B cell (primary cell): ENCODE measurements at regions of chr10 and their contacts with region 1.

Region 1: GRCh38 chr10:110354322-110354766 is 49.6 kb upstream of the SMNDC1 start:
- DNase-seq: peak; percentile 86
- ATAC-seq: no peak
- H3K4me3 ChIP-seq: no peak overlapping the region
- H3K4me3 Mint-ChIP-seq: peak overlapping the region; percentile 86
- H3K27ac ChIP-seq: peak overlapping the region in 1 of 2 donors; percentile 94
- H3K27ac Mint-ChIP-seq: peak overlapping the region; percentile 94
- H3K4me1 ChIP-seq: peaks cover 52 to 56% of the 10 kb centered on the region in 2 donors
- H3K4me1 Mint-ChIP-seq: peaks cover 70% of the 10 kb centered on the region
- H3K27me3 ChIP-seq: no peaks in the 10 kb centered on the region
- H3K27me3 Mint-ChIP-seq: no peaks in the 10 kb centered on the region
- CTCF ChIP-seq: peak; percentile 84

Region 2: DNA sequence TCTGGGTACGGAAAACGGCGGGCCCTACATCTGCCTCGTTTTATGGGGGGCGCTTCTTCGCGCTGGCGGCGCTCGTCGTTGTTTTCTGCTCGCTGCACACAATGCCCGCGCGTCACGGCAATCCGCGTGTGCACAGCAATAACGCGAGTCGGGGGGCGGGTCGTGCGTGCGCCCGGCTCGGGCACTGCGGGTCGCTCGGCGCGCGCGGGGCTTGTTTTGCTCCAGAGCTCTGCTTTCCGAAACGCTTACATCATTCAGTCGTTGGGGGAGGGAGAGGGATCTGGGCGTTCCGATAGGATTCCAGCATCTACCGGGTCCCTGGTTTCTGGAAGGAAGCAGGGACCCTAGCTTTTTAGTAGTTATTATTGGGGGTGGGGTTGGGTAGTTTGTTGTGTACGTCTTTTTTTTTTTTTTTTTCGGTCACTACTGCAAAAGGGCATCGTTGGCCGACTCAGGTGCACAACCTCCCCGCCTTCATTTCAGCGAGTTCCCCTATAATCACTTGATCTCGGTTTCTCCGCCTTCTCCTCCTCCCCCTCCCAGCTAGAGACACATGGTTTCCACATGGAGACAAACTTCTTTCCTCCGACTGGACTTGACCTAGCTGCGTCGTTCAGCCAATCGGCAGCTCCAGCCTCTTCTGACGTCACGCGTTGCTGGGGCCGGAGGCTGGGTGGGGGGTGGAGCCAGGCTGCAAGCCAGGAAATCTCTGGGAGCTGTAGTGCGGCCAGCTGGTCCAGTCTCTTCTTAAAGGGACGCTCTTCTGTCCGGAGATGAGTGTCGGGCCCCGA is 143.5 kb before region 1 on chr10:
- CTCF ChIA-PET with region 1: no interaction called
- POLR2A ChIA-PET with region 1: interaction called, 4 read pairs
- intact Hi-C with region 1: loop called (anchors 5 kb)
- DNase-seq: peak; percentile 94
- ATAC-seq: peak; percentile 68
- H3K4me3 ChIP-seq: peak overlapping the region; percentile 67 to 90 (median 82)
- H3K4me3 Mint-ChIP-seq: peak overlapping the region; percentile 88
- H3K27ac ChIP-seq: peak overlapping the region; percentile 82 to 85
- H3K27ac Mint-ChIP-seq: peak overlapping the region; percentile 97
- H3K4me1 ChIP-seq: peaks cover 44 to 67% of the 10 kb centered on the region in 2 donors
- H3K4me1 Mint-ChIP-seq: peaks cover 58% of the 10 kb centered on the region
- H3K27me3 ChIP-seq: peaks cover 0 to 18% (median 7%) of the 10 kb centered on the region in 4 experiments
- H3K27me3 Mint-ChIP-seq: peaks cover 4% of the 10 kb centered on the region
- CTCF ChIP-seq: no peak

Region 3: DNA sequence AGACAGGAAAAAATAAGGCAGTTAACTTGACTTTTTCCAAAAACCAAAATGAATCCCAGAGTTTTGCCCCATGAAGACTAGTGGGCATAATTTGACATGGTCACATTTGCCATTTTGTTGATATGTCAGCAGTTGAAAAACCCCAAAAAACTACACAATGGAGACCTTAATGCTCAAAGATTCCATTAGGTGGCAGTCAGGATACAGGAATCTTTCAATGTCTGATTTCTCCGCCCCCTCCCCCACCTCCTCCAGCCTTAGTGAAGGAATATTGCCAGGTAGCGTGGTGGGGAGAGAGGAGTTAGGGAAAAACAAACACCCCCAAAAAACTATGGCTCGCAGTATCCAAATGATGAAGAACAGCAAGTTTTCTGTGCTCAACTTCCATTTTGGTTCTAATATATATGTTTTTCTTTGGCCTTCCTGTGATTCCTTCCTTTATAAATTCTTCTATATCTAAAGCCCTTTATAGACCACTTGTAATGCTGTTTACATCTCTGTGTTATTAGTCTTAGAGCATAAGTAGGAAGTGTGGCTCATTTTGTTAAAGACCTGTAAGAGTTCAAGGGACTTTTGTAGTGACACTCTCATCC is 42.9 kb before region 1 on chr10:
- CTCF ChIA-PET with region 1: interaction called, 22 read pairs
- POLR2A ChIA-PET with region 1: interaction called, 4 read pairs
- intact Hi-C with region 1: loop called (anchors 1 kb)
- DNase-seq: peak; percentile 73
- ATAC-seq: peak; percentile 78
- H3K4me3 ChIP-seq: no peak overlapping the region
- H3K4me3 Mint-ChIP-seq: no peak overlapping the region
- H3K27ac ChIP-seq: no peak overlapping the region
- H3K27ac Mint-ChIP-seq: no peak overlapping the region
- H3K4me1 ChIP-seq: peaks cover 3% of the 10 kb centered on the region in 2 donors
- H3K4me1 Mint-ChIP-seq: peaks cover 8% of the 10 kb centered on the region
- H3K27me3 ChIP-seq: no peaks in the 10 kb centered on the region
- H3K27me3 Mint-ChIP-seq: peaks cover 4% of the 10 kb centered on the region
- CTCF ChIP-seq: peak; percentile 76

Region 4: DNA sequence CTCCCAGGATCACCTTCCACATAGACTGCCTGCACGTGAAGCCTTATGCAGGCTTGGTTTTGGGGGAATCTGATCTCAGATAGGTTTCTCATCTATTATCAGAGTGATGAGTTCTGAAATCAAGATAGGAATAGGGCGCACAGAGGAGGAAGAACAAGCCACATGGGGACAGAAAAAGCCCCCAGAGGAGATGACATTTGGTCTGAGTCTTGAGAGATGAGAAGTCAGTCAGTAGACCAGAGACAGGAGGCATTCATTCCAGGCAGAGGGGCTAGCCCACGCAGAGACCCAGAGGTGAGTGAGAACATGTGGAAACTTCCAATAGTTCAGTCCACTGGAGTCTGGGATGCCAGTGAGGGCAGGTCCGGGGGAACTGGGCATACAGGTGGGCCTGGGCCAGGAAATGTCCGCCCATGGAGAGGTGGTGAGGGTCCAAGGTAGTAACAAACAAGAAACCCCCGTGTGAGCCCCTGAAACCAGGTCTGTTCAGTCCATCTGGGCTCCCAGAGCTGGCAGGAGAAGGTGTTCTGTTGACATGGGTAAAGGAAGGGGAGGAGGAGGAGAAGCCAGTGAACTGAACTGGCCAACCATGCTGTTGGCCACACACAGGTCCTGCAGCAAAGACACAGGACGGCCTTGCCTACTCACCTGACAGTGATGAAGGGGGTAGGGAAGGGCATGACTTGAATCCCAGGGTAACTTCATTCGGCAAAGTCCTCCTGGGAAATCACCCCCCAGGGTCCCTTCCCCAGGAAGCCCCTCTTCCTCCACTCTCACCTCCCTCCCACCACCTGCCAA is 19.7 kb after region 1 on chr10:
- CTCF ChIA-PET with region 1: no interaction called
- POLR2A ChIA-PET with region 1: no interaction called
- intact Hi-C with region 1: no loop called
- DNase-seq: no peak
- ATAC-seq: no peak
- H3K4me3 ChIP-seq: no peak overlapping the region
- H3K4me3 Mint-ChIP-seq: no peak overlapping the region
- H3K27ac ChIP-seq: no peak overlapping the region
- H3K27ac Mint-ChIP-seq: no peak overlapping the region
- H3K4me1 ChIP-seq: no peaks in the 10 kb centered on the region
- H3K4me1 Mint-ChIP-seq: peaks cover 3% of the 10 kb centered on the region
- H3K27me3 ChIP-seq: no peaks in the 10 kb centered on the region
- H3K27me3 Mint-ChIP-seq: peaks cover 18% of the 10 kb centered on the region
- CTCF ChIP-seq: no peak

Region 5: GRCh38 chr10:110414563-110415309 is 60.4 kb after region 1 on chr10:
- CTCF ChIA-PET with region 1: interaction called, 72 read pairs
- POLR2A ChIA-PET with region 1: interaction called, 30 read pairs
- intact Hi-C with region 1: loop called (anchors 1 kb)
- DNase-seq: peak; percentile 92
- ATAC-seq: peak; percentile 92
- H3K4me3 ChIP-seq: peak overlapping the region in 1 of 5 experiments; percentile 11
- H3K4me3 Mint-ChIP-seq: peak overlapping the region; percentile 60
- H3K27ac ChIP-seq: no peak overlapping the region
- H3K27ac Mint-ChIP-seq: peak overlapping the region; percentile 76
- H3K4me1 ChIP-seq: peaks cover 57 to 74% of the 10 kb centered on the region in 2 donors
- H3K4me1 Mint-ChIP-seq: peaks cover 69% of the 10 kb centered on the region
- H3K27me3 ChIP-seq: peaks cover 0 to 28% (median 7%) of the 10 kb centered on the region in 4 experiments
- H3K27me3 Mint-ChIP-seq: peaks cover 13% of the 10 kb centered on the region
- CTCF ChIP-seq: no peak

Region 6: DNA sequence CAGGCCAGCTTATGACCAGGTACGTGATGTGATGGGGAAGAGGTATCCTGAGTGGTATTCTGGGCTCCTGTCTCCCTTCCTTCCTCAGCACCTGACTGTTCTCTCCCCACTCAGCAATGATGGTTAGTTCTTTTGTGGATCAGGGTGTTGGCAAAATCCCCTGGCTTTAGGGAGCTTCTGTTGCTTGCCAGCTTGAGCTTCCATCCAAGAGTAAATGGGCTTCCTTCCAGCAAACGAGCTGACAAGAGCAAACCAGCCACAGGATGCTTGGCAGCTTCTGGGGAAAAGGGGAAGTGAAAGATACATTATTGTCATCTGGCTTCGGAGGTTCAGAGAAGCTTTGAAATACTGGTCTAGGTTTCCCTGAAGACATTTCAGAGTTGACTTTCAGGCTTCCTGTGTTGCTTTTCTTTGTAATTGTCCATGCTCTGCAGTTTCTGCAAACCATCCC is 148.5 kb after region 1 on chr10:
- CTCF ChIA-PET with region 1: interaction called, 87 read pairs
- POLR2A ChIA-PET with region 1: interaction called, 12 read pairs
- intact Hi-C with region 1: loop called (anchors 1 kb)
- DNase-seq: peak; percentile 87
- ATAC-seq: peak; percentile 51
- H3K4me3 ChIP-seq: peak overlapping the region in 1 of 5 experiments; percentile 45
- H3K4me3 Mint-ChIP-seq: peak overlapping the region; percentile 85
- H3K27ac ChIP-seq: peak overlapping the region; percentile 82 to 87
- H3K27ac Mint-ChIP-seq: peak overlapping the region; percentile 90
- H3K4me1 ChIP-seq: peaks cover 54 to 63% of the 10 kb centered on the region in 2 donors
- H3K4me1 Mint-ChIP-seq: peaks cover 67% of the 10 kb centered on the region
- H3K27me3 ChIP-seq: peaks cover 0 to 11% (median 2%) of the 10 kb centered on the region in 4 experiments
- H3K27me3 Mint-ChIP-seq: peaks cover 6% of the 10 kb centered on the region
- CTCF ChIP-seq: no peak

Region 7: GRCh38 chr10:110556969-110557601 is 202.7 kb after region 1 on chr10:
- CTCF ChIA-PET with region 1: interaction called, 164 read pairs
- POLR2A ChIA-PET with region 1: no interaction called
- intact Hi-C with region 1: no loop called
- DNase-seq: peak; percentile 79
- ATAC-seq: peak; percentile 83
- H3K4me3 ChIP-seq: no peak overlapping the region
- H3K4me3 Mint-ChIP-seq: no peak overlapping the region
- H3K27ac ChIP-seq: no peak overlapping the region
- H3K27ac Mint-ChIP-seq: no peak overlapping the region
- H3K4me1 ChIP-seq: peaks cover 0 to 4% of the 10 kb centered on the region in 2 donors
- H3K4me1 Mint-ChIP-seq: peaks cover 3% of the 10 kb centered on the region
- H3K27me3 ChIP-seq: peaks cover 0 to 6% (median 2%) of the 10 kb centered on the region in 4 experiments
- H3K27me3 Mint-ChIP-seq: peaks cover 15% of the 10 kb centered on the region
- CTCF ChIP-seq: peak; percentile 72

Region 8: GRCh38 chr10:110918643-110919363 is 564.5 kb after region 1 on chr10 and contains the start of gene BBIP1:
- CTCF ChIA-PET with region 1: no interaction called
- POLR2A ChIA-PET with region 1: no interaction called
- intact Hi-C with region 1: loop called (anchors 2 kb)
- DNase-seq: peak; percentile 99
- ATAC-seq: peak; percentile 85
- H3K4me3 ChIP-seq: peak within 1 kb of the TSS; percentile 78 to 100 (median 97)
- H3K4me3 Mint-ChIP-seq: peak within 1 kb of the TSS; percentile 98
- H3K27ac ChIP-seq: peak within 1 kb of the TSS; percentile 95 to 99
- H3K27ac Mint-ChIP-seq: peak within 1 kb of the TSS; percentile 100
- H3K4me1 ChIP-seq: peaks cover 16 to 33% of the 10 kb centered on the region in 2 donors
- H3K4me1 Mint-ChIP-seq: peaks cover 49% of the 10 kb centered on the region
- H3K27me3 ChIP-seq: no peaks in the 10 kb centered on the region
- H3K27me3 Mint-ChIP-seq: no peaks in the 10 kb centered on the region
- CTCF ChIP-seq: no peak
- total RNA-seq, gene BBIP1: 35.1 and 46.1 TPM in 2 replicates